Body of pancreas (tissue), 4 donors: ENCODE measurements at regions of chr11 and their contacts with region 1.

Region 1: DNA sequence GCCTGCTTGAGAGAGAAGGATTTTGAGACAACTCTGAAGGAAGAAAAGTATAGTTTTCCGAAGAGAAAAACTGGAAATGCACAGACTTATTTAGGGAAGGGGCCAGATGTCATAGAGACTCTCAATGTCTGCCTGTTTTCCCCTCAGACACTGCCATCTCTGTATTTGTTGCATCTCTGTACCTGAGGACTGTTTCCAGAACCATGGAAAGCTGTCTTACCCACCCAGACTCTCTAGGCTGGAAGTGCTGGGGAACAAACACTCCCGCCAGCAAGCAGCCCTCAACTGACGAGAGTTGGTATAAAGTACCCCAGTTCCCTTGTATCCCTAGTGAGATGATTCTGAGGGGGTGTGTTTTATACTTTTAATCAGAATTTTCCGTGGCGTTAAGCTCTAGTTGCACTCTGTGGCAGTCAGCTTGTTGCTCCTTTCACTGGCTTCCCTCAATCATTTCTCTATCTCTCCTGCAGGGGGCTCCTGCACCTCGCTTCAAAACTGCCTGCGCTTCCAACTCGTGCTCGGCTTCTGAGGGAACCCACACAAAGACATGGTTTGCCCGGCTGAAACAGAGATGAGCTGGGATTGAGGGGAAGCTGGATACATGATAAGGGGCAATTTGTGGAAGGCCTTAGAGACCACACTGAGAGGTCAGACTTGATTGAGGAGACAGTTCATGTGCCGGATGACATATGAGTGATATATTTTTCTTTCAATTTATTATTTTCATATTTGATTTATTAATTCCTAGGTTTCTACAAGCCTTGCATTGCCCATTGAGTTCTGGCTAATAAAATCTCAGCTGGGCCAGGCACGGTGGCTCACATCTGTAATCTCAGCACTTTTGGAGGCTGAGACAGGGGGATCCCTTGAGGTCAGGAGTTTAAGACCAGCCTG is 36.9 kb upstream of the CLPB start:
- DNase-seq: peak; percentile 55 to 73 (median 68)
- ATAC-seq: peak; percentile 83
- H3K4me3 ChIP-seq: no peak overlapping the region
- H3K27ac ChIP-seq: no peak overlapping the region
- H3K4me1 ChIP-seq: peaks cover 7% of the 10 kb centered on the region
- H3K27me3 ChIP-seq: peaks cover 0 to 12% of the 10 kb centered on the region in 2 donors
- CTCF ChIP-seq: peak; percentile 55 to 79 (median 73)
- POLR2A ChIP-seq: no peak

Region 2: DNA sequence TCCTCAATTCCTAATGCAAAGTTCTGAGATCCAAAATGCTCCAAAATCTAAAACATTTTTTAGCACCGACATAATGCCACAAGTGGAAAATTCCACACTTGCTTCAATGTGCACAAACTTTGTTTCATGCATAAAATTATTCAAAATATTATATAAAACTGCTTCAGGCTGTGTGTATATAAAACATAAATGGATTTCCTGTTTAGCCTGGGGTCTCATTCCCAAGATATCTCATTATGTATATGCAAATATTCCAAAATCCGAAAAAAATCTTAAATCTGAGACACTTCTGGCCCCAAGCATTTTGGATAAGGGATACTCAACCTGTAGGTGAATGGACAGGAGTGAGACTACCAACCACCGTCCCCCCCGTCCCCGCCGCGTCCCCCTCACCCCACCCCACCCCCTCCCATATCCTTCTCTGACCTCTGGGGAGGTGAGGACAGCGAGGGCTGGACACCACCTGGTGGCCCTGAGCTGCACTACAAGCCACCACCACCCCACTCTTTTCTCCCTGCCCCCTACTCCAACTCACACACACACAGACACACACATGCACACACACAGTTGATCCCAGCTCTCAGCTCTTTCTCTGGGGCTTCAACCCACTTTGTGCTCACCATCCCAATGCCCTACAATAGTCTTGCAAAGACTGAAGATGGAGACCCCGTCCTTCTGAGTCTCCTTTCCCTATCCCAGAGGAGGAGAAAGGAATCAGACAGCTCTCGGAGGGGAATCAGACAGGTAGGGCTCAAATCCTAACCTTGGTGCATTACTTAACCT is 102.0 kb after region 1 on chr11:
- intact Hi-C with region 1: loop called (anchors 10 kb)
- DNase-seq: peak in 3 of 4 donors; percentile 26 to 53 (median 28)
- ATAC-seq: peak; percentile 60
- H3K4me3 ChIP-seq: no peak overlapping the region
- H3K27ac ChIP-seq: no peak overlapping the region
- H3K4me1 ChIP-seq: no peaks in the 10 kb centered on the region
- H3K27me3 ChIP-seq: no peaks in the 10 kb centered on the region
- CTCF ChIP-seq: peak; percentile 35 to 77 (median 57)
- POLR2A ChIP-seq: no peak

Region 3: DNA sequence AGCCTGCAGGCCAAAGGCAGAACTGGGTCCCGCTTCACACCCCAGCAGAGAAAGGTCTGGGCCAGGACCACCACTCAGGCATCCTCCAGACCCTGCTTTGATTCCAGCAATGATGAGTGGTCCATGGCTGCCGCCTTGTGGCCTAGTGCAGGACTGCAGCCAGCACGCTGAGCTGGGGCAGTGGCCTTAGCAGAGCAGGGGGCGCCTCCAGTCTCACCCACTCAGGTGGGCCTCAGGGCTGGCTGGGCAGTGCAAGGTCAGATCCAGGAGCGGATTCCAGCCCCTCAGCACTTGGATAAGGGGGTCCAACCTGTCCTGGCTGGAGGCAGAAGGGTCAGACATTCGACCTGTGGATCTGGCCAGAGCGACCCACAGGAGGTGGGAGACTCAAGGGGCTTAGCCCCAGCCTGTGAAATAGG is 212.5 kb after region 1 on chr11:
- intact Hi-C with region 1: loop called (anchors 10 kb)
- DNase-seq: peak; percentile 58 to 74 (median 64)
- ATAC-seq: peak; percentile 54
- H3K4me3 ChIP-seq: no peak overlapping the region
- H3K27ac ChIP-seq: no peak overlapping the region
- H3K4me1 ChIP-seq: no peaks in the 10 kb centered on the region
- H3K27me3 ChIP-seq: peaks cover 0 to 4% of the 10 kb centered on the region in 2 donors
- CTCF ChIP-seq: peak; percentile 61 to 86 (median 80)
- POLR2A ChIP-seq: no peak